Right ventricle myocardium inferior (tissue), 1 donor: ENCODE measurements at regions of chr14 and their contacts with region 1.

Region 1: GRCh38 chr14:34982417-34983147 is at the start of gene SRP54:
- DNase-seq: peak; percentile 98
- ATAC-seq: peak; percentile 98
- total RNA-seq, gene SRP54: 29.6 TPM

Region 2: GRCh38 chr14:34875031-34875922 is 107.3 kb before region 1 on chr14 and contains the start of gene BAZ1A:
- intact Hi-C with region 1: loop called (anchors 2 kb)
- DNase-seq: peak; percentile 80
- ATAC-seq: peak; percentile 74
- total RNA-seq, gene BAZ1A: 5.6 TPM

Region 3: GRCh38 chr14:35046048-35046741 is 63.6 kb after region 1 on chr14 and contains the start of gene FAM177A1:
- intact Hi-C with region 1: loop called (anchors 1 kb)
- DNase-seq: peak; percentile 100
- ATAC-seq: peak; percentile 100
- total RNA-seq, gene FAM177A1: 66.5 TPM